CD4-positive, alpha-beta T cell (primary cell): ENCODE measurements at regions of chr3 and their contacts with region 1.

Region 1: DNA sequence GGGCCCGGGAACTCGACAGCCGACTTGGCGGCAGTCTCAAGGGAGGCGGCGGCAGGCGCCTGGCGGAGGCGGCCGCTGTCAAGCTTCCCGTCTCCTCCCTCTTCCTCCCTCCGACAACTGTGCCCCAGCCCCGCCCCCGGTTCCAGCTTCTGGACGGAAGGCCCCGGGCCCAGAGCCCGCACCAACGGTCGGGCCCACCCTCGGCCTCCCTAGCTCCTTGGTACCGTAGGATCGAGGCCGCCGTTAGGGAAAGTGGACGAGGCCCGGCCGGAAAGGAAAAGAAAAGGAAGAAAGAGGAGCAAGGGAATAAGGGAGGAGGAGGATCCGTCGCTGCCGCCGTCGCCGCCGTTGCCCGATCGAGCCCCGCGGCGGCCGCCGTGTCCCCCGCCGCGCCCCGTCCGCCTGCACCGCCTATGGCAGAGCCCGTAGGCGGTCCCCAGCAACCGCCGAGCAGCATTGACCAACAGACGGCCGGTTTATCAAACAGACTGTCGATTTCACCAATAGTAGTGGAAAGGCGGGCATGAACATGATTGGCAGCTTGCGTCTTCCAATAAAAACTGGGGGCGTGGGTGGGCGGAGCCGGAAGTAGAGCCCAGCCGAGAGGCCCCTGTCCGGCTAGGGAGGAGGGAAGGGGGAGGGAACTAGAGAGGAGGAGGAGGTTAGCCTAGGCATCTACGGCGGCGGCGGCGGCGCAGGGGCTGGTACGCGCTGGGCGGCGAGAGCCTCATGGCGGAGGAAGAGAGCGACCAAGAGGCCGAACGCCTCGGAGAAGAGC is at the starts of genes CGGBP1 and ZNF654:
- DNase-seq: peak; percentile 96 to 99 (median 99)
- ATAC-seq: peak; percentile 89
- H3K4me3 ChIP-seq: peak within 1 kb of the TSS; percentile 98
- H3K4me3 Mint-ChIP-seq: peak within 1 kb of the TSS; percentile 100
- H3K27ac ChIP-seq: peak within 1 kb of the TSS; percentile 92
- H3K27ac Mint-ChIP-seq: peak within 1 kb of the TSS; percentile 93
- H3K4me1 ChIP-seq: peaks cover 5% of the 10 kb centered on the region
- H3K4me1 Mint-ChIP-seq: peaks cover 72% of the 10 kb centered on the region
- H3K27me3 ChIP-seq: no peaks in the 10 kb centered on the region
- H3K27me3 Mint-ChIP-seq: no peaks in the 10 kb centered on the region
- CTCF ChIP-seq: no peak
- total RNA-seq, gene CGGBP1: 88.7 to 89.7 TPM
- total RNA-seq, gene ZNF654: 6.5 to 7.6 TPM

Region 2: GRCh38 chr3:87227104-87227834 is 831.5 kb before region 1 on chr3 and contains the start of gene CHMP2B:
- CTCF ChIA-PET with region 1: no interaction called
- POLR2A ChIA-PET with region 1: interaction called, 8 read pairs
- intact Hi-C with region 1: loop called in 1 of 2 experiments (anchors 2 kb)
- DNase-seq: peak; percentile 86 to 96 (median 90)
- ATAC-seq: peak; percentile 91
- H3K4me3 ChIP-seq: peak within 1 kb of the TSS; percentile 90
- H3K4me3 Mint-ChIP-seq: peak within 1 kb of the TSS; percentile 97
- H3K27ac ChIP-seq: peak within 1 kb of the TSS; percentile 65 to 85
- H3K27ac Mint-ChIP-seq: peak within 1 kb of the TSS; percentile 93
- H3K4me1 ChIP-seq: peaks cover 9% of the 10 kb centered on the region
- H3K4me1 Mint-ChIP-seq: peaks cover 53% of the 10 kb centered on the region
- H3K27me3 ChIP-seq: peaks cover 0 to 7% of the 10 kb centered on the region in 2 experiments
- H3K27me3 Mint-ChIP-seq: peaks cover 13% of the 10 kb centered on the region
- CTCF ChIP-seq: no peak
- total RNA-seq, gene CHMP2B: 24.7 to 31.5 TPM

Region 3: DNA sequence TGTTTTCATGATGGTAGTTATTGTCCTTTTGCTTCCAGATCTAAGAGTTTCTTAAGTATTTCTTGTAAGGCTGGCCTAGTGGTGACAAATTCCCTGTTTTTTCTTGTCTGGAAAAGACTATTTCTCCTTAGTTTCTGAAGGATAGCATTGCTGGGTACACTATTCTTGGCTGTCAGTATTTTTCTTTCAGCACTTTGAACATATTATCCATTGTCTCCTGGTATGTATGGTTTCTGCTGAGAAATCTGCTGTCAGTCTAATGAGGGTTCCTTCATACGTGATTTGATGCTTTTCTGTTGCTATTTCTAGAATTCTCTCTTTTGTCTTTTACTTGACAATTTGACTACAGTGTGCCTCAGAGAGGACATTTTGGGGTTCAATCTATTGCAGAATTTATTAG is 134.3 kb before region 1 on chr3:
- CTCF ChIA-PET with region 1: no interaction called
- POLR2A ChIA-PET with region 1: no interaction called
- intact Hi-C with region 1: no loop called
- DNase-seq: no peak
- ATAC-seq: no peak
- H3K4me3 ChIP-seq: no peak overlapping the region
- H3K4me3 Mint-ChIP-seq: no peak overlapping the region
- H3K27ac ChIP-seq: no peak overlapping the region
- H3K27ac Mint-ChIP-seq: no peak overlapping the region
- H3K4me1 ChIP-seq: no peaks in the 10 kb centered on the region
- H3K4me1 Mint-ChIP-seq: no peaks in the 10 kb centered on the region
- H3K27me3 ChIP-seq: no peaks in the 10 kb centered on the region
- H3K27me3 Mint-ChIP-seq: no peaks in the 10 kb centered on the region
- CTCF ChIP-seq: no peak

Region 4: DNA sequence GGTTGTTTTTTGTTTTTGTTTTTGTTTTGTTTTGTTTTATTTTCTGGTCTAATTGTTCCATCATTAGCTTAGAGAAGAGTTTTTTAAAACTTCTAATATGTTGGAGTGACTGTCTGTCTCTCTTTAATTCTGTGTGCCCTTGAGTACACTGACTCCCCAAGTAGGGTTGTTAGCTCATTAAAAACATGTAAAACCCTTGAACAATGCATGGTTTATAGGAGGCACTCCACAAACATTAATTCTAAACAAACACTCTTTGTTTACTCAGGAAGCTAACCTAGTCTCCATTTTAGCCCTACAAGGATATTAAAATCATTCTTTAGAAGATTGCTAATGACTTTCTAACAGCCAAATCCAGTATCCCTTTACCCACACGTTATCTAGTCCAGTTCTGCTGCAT is 100.5 kb before region 1 on chr3:
- CTCF ChIA-PET with region 1: no interaction called
- POLR2A ChIA-PET with region 1: no interaction called
- intact Hi-C with region 1: no loop called
- DNase-seq: no peak
- ATAC-seq: no peak
- H3K4me3 ChIP-seq: no peak overlapping the region
- H3K4me3 Mint-ChIP-seq: no peak overlapping the region
- H3K27ac ChIP-seq: no peak overlapping the region
- H3K27ac Mint-ChIP-seq: no peak overlapping the region
- H3K4me1 ChIP-seq: no peaks in the 10 kb centered on the region
- H3K4me1 Mint-ChIP-seq: no peaks in the 10 kb centered on the region
- H3K27me3 ChIP-seq: peaks cover 0 to 1% of the 10 kb centered on the region in 2 experiments
- H3K27me3 Mint-ChIP-seq: peaks cover 24% of the 10 kb centered on the region
- CTCF ChIP-seq: no peak

Region 5: GRCh38 chr3:88031642-88032077 is 27.1 kb before region 1 on chr3:
- CTCF ChIA-PET with region 1: no interaction called
- POLR2A ChIA-PET with region 1: interaction called, 59 read pairs
- intact Hi-C with region 1: loop called in 1 of 2 experiments (anchors 2 kb)
- DNase-seq: peak in 7 of 14 experiments; percentile 6 to 79 (median 42)
- ATAC-seq: peak; percentile 87
- H3K4me3 ChIP-seq: peak overlapping the region; percentile 53
- H3K4me3 Mint-ChIP-seq: peak overlapping the region; percentile 84
- H3K27ac ChIP-seq: peak overlapping the region; percentile 18 to 63
- H3K27ac Mint-ChIP-seq: peak overlapping the region; percentile 87
- H3K4me1 ChIP-seq: peaks cover 4% of the 10 kb centered on the region
- H3K4me1 Mint-ChIP-seq: peaks cover 48% of the 10 kb centered on the region
- H3K27me3 ChIP-seq: no peaks in the 10 kb centered on the region
- H3K27me3 Mint-ChIP-seq: no peaks in the 10 kb centered on the region
- CTCF ChIP-seq: no peak

Region 6: DNA sequence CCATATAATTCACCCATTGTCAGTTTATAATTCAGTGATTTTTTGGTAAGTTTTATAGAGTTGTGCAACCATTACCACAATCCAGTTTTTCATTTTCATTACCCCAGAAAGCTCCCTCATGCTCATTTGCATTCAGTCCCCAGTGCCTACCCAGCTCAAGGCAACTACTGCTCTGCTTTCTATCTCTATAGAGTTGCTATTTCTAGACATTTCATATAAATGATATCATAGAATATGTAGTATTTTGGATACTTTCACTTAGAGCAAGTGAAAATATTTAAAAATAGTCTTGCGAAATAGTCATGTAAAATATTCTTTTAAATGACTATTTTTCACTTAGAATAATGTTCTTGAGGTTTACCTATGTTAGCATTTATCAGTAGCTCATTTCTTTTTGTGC is 42.4 kb after region 1 on chr3:
- CTCF ChIA-PET with region 1: no interaction called
- POLR2A ChIA-PET with region 1: interaction called, 4 read pairs
- intact Hi-C with region 1: loop called in 1 of 2 experiments (anchors 5 kb)
- DNase-seq: no peak
- ATAC-seq: no peak
- H3K4me3 ChIP-seq: no peak overlapping the region
- H3K4me3 Mint-ChIP-seq: no peak overlapping the region
- H3K27ac ChIP-seq: no peak overlapping the region
- H3K27ac Mint-ChIP-seq: no peak overlapping the region
- H3K4me1 ChIP-seq: no peaks in the 10 kb centered on the region
- H3K4me1 Mint-ChIP-seq: peaks cover 21% of the 10 kb centered on the region
- H3K27me3 ChIP-seq: no peaks in the 10 kb centered on the region
- H3K27me3 Mint-ChIP-seq: no peaks in the 10 kb centered on the region
- CTCF ChIP-seq: no peak

Region 7: GRCh38 chr3:88149509-88150362 is 91.0 kb after region 1 on chr3 and contains the start of gene C3orf38:
- CTCF ChIA-PET with region 1: interaction called, 4 read pairs
- POLR2A ChIA-PET with region 1: interaction called, 124 read pairs
- intact Hi-C with region 1: loop called (anchors 1 to 2 kb)
- DNase-seq: peak; percentile 61 to 90 (median 76)
- ATAC-seq: peak; percentile 94
- H3K4me3 ChIP-seq: peak within 1 kb of the TSS; percentile 87
- H3K4me3 Mint-ChIP-seq: peak within 1 kb of the TSS; percentile 99
- H3K27ac ChIP-seq: peak within 1 kb of the TSS; percentile 83 to 86
- H3K27ac Mint-ChIP-seq: peak within 1 kb of the TSS; percentile 99
- H3K4me1 ChIP-seq: peaks cover 19% of the 10 kb centered on the region
- H3K4me1 Mint-ChIP-seq: peaks cover 40% of the 10 kb centered on the region
- H3K27me3 ChIP-seq: no peaks in the 10 kb centered on the region
- H3K27me3 Mint-ChIP-seq: no peaks in the 10 kb centered on the region
- CTCF ChIP-seq: no peak
- total RNA-seq, gene C3orf38: 45.9 to 52.9 TPM